ENCODE measurements at regions of chr11 and their contacts with region 1.

Region 1: DNA sequence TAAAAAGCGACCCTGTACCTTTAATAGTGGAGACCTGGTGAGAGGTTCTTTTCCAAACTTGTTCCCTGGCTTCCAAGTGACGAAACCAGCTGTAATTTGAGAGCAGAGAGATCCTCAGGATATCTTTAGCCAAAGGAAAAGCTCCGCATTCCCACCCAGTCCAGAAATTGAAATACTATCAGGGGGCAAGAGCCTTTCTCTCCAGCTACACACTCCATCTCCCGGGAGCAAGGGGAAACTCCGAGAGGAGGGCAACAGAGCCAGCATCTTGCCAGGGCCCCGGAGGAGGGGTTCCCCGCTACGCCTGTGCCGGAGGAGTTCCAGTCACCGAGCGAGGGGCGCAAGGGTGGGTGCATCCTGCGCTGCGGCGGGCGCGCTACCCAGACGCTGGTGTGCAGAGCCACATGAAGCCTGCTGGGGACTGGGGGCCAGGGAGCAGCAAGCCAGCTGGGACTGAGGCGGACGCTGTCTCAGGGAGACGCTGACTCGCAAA is at the start of gene FIBIN:
- DNase-seq: peak in 1 of 2 donors; percentile 73
- H3K4me3 ChIP-seq: peak within 1 kb of the TSS; percentile 60 to 93
- H3K27ac ChIP-seq: peak within 1 kb of the TSS; percentile 81 to 92
- H3K4me1 ChIP-seq: peaks cover 7 to 9% of the 10 kb centered on the region in 2 donors
- H3K27me3 ChIP-seq: no peaks in the 10 kb centered on the region
- CTCF ChIP-seq: no peak
- total RNA-seq, gene FIBIN: 59.1 TPM

Region 2: GRCh38 chr11:26761361-26761809 is 232.6 kb before region 1 on chr11:
- intact Hi-C with region 1: loop called (anchors 2 kb)
- DNase-seq: no peak
- H3K4me3 ChIP-seq: no peak overlapping the region
- H3K27ac ChIP-seq: peak overlapping the region in 1 of 2 donors; percentile 5
- H3K4me1 ChIP-seq: peaks cover 0 to 13% of the 10 kb centered on the region in 2 donors
- H3K27me3 ChIP-seq: no peaks in the 10 kb centered on the region
- CTCF ChIP-seq: no peak

Region 3: GRCh38 chr11:26820739-26821138 is 173.3 kb before region 1 on chr11:
- intact Hi-C with region 1: loop called (anchors 5 kb)
- DNase-seq: peak in 1 of 2 donors; percentile 69
- H3K4me3 ChIP-seq: no peak overlapping the region
- H3K27ac ChIP-seq: peak overlapping the region; percentile 56 to 67
- H3K4me1 ChIP-seq: peaks cover 0 to 12% of the 10 kb centered on the region in 2 donors
- H3K27me3 ChIP-seq: no peaks in the 10 kb centered on the region
- CTCF ChIP-seq: no peak

Region 4: GRCh38 chr11:26841818-26842473 is 152.1 kb before region 1 on chr11:
- intact Hi-C with region 1: loop called (anchors 2 kb)
- DNase-seq: peak in 1 of 2 donors; percentile 70
- H3K4me3 ChIP-seq: no peak overlapping the region
- H3K27ac ChIP-seq: peak overlapping the region; percentile 94 to 96
- H3K4me1 ChIP-seq: peaks cover 13 to 64% of the 10 kb centered on the region in 2 donors
- H3K27me3 ChIP-seq: no peaks in the 10 kb centered on the region
- CTCF ChIP-seq: no peak

Region 5: GRCh38 chr11:26947379-26947844 is 46.6 kb before region 1 on chr11:
- intact Hi-C with region 1: loop called (anchors 1 kb)
- DNase-seq: peak in 1 of 2 donors; percentile 86
- H3K4me3 ChIP-seq: no peak overlapping the region
- H3K27ac ChIP-seq: peak overlapping the region; percentile 70 to 81
- H3K4me1 ChIP-seq: peaks cover 0 to 52% of the 10 kb centered on the region in 2 donors
- H3K27me3 ChIP-seq: no peaks in the 10 kb centered on the region
- CTCF ChIP-seq: no peak

Region 6: GRCh38 chr11:27060816-27061460 is 66.9 kb after region 1 on chr11:
- intact Hi-C with region 1: loop called (anchors 5 kb)
- DNase-seq: no peak
- H3K4me3 ChIP-seq: peak overlapping the region in 1 of 2 donors; percentile 48
- H3K27ac ChIP-seq: peak overlapping the region; percentile 61 to 70
- H3K4me1 ChIP-seq: peaks cover 0 to 6% of the 10 kb centered on the region in 2 donors
- H3K27me3 ChIP-seq: no peaks in the 10 kb centered on the region
- CTCF ChIP-seq: no peak

Region 7: GRCh38 chr11:27158722-27159679 is 165.0 kb after region 1 on chr11:
- intact Hi-C with region 1: loop called (anchors 2 kb)
- DNase-seq: peak in 1 of 2 donors; percentile 79
- H3K4me3 ChIP-seq: no peak overlapping the region
- H3K27ac ChIP-seq: peak overlapping the region in 1 of 2 donors; percentile 32
- H3K4me1 ChIP-seq: peaks cover 0 to 4% of the 10 kb centered on the region in 2 donors
- H3K27me3 ChIP-seq: no peaks in the 10 kb centered on the region
- CTCF ChIP-seq: peak; percentile 76 to 88 (median 84)

Measured in ascending aorta (tissue), 2 donors.